ENCODE measurements at regions of chr19 and their contacts with region 1.

Region 1: DNA sequence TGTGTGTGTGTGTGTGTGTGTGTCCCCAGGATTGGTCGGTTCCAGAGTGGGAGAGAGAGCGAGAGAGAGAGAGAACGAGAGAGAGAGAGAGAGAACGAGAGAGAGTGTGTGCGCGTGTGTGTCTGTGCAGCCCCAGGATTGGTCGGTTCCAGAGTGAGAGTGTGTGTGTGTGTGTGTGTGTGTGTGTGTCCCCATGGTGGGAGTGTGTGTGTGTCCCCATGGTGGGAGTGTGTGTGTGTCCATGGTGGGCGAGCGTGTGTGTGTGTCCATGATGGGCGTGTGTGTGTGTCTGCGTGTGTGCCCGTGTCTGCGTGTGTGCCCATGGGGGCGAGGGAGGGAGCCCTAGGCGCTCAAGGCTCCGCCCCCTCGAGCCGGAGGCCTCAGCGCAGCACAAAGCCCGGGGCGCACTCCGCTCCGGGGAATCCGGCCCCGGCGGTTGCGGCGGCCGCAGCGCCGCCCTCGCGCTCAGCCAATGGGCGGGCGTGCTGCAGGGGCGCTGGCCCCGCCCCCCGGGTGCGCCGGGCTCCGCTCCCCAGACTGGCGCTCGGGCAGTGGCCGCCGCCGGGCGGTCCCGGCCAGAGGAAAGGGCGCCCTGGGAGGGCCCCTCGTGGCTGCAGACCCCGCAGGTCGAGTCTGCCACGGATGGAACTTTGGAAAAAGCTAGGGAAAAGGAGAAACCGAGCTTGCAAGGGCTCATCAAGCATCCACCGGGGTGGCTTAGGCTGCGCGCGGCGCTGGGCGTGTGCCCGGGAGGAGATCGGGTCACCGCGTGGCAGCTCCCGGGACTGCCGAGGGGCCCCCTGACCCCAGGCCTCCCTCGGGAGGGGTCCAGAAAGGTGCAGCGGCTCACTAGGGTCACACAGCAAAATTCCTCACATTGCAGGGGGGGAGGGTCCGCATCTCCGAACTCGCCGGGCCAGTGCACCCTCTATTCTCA is 96.2 kb downstream of the INSR start:
- DNase-seq: peak; percentile 98
- H3K4me3 ChIP-seq: peak overlapping the region; percentile 62 to 83 (median 66)
- H3K27ac ChIP-seq: peak overlapping the region in 6 of 8 donors; percentile 58 to 91 (median 82)
- H3K4me1 ChIP-seq: peaks cover 5 to 56% (median 37%) of the 10 kb centered on the region in 6 donors
- H3K27me3 ChIP-seq: peaks cover 0 to 7% (median 0%) of the 10 kb centered on the region in 7 donors
- CTCF ChIP-seq: peak in 6 of 11 experiments; percentile 15 to 49 (median 29)
- POLR2A ChIP-seq: peak in 2 of 3 donors; percentile 35 to 79

Region 2: GRCh38 chr19:7293795-7294570 is 96.0 kb after region 1 on chr19 and contains the start of gene INSR:
- intact Hi-C with region 1: loop called (anchors 10 kb)
- DNase-seq: peak; percentile 91
- H3K4me3 ChIP-seq: peak within 1 kb of the TSS; percentile 69 to 90 (median 80)
- H3K27ac ChIP-seq: peak within 1 kb of the TSS; percentile 57 to 93 (median 91)
- H3K4me1 ChIP-seq: peaks cover 5 to 61% (median 28%) of the 10 kb centered on the region in 6 donors
- H3K27me3 ChIP-seq: peaks cover 0 to 59% (median 18%) of the 10 kb centered on the region in 7 donors
- CTCF ChIP-seq: no peak
- POLR2A ChIP-seq: peak in 1 of 3 donors; percentile 59
- total RNA-seq, gene INSR: 202 to 467 (median 368) TPM